ENCODE measurements at regions of chr2 and their contacts with region 1.

Region 1: DNA sequence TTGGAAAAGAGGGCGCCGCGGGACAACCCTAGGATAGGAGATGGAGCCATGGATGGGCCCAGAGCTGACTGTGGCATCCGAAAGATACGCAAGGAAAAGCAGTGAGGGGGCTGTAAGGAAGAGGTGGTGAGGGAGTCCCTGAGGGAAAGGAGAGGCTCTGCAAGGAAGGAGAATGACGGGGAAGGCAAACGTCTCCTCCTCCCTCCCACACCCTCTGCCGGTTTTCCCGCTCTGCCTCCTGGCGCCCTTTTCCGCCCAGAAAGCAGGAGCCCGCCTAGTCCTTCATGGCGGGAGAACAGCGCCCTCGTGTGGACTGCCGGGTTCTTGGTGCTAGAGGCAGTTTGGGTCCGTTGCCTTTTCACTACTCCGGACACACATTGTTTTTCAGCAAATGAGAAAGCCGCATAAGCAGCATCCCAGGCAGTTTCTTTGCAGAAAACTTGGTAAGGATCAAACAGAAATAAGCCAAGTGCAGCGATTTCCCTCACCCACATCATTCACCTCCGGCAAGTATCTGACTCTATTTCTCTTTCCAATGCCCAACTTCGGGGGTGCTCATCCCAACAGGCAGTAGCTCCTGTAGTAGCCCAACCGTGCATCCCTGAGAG is 200.4 kb downstream of the INO80D start:
- DNase-seq: peak; percentile 85
- H3K4me3 ChIP-seq: no peak overlapping the region
- H3K27ac ChIP-seq: no peak overlapping the region
- H3K4me1 ChIP-seq: no peaks in the 10 kb centered on the region
- H3K27me3 ChIP-seq: peaks cover 4% of the 10 kb centered on the region; the same call in 1 of the 2 replicates

Region 2: GRCh38 chr2:205696331-205696923 is 189.2 kb before region 1 on chr2:
- in situ Hi-C with region 1: loop called (anchors 10 kb)
- DNase-seq: no peak
- H3K4me3 ChIP-seq: no peak overlapping the region
- H3K27ac ChIP-seq: no peak overlapping the region
- H3K4me1 ChIP-seq: peaks cover 57% of the 10 kb centered on the region
- H3K27me3 ChIP-seq: no peaks in the 10 kb centered on the region

Region 3: DNA sequence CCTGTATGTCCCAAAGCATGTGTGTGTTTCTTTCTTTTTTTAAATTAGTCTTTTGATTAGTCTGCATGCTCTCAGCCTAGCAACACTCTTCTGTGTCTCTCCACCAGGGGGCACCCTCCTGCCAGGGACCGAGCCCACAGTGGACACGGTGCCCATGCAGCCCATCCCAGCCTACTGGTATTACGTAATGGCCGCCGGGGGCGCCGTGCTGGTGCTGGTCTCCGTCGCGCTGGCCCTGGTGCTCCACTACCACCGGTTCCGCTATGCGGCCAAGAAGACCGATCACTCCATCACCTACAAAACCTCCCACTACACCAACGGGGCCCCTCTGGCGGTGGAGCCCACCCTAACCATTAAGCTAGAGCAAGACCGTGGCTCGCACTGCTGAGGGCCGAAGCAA is 109.5 kb before region 1 on chr2:
- in situ Hi-C with region 1: loop called (anchors 10 kb)
- DNase-seq: peak; percentile 34
- H3K4me3 ChIP-seq: no peak overlapping the region
- H3K27ac ChIP-seq: no peak overlapping the region
- H3K4me1 ChIP-seq: no peaks in the 10 kb centered on the region
- H3K27me3 ChIP-seq: no peaks in the 10 kb centered on the region

Measured in GM23248 (cell line).